ENCODE measurements at regions of chrX and their contacts with region 1.

Region 1: DNA sequence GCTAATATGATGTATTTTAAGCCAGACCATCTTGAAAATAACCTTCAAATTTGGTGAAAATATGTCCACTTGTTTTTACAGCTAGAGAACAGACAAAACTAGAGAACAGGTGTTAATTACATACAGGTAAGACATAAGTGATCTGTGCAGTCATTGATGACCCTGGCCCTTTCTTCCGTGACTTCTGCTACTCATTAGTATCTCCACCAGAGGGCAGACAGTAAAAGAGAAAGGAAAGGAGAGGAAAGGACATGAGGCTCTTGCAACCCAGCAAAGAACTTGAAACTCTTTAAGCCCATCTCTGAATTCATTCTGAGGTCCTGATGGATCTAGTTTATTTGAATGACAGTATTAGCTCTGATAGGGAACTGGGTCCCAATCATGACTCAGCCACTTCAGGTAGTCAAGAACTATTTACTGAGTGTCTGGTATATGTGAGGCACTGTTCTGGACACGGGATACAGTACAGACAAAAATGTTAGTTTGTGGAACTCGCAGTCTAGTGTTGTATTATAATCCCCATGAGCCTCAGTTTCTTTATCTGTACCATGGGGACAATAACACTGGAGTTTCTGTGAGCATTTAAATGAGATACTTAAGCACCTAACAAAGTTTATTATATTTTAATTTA is 121.0 kb upstream of the TEX13D start:
- DNase-seq: no peak
- ATAC-seq: no peak

Region 2: DNA sequence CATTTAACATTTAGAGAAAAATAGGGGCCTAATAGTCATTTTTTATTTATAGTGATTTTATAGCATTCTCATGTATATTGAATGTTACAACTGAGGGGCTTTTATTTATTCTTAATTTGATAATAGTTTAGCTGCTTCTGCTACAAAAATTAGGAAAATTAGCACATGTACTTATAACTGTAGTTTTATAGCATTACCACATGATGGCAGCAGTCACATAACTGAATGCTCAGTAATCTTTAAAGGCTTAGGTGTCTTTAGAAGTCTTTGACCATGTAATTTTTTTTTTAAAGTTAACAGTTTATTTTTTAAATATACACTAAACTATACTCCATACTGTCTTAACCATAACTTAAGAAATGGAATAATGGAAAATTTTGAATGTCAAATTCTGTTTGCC is 113.3 kb before region 1 on chrX:
- intact Hi-C with region 1: loop called (anchors 10 kb)
- DNase-seq: no peak
- ATAC-seq: no peak